Activated naive CD4-positive, alpha-beta T cell treated with anti-CD3 and anti-CD28 coated beads, Interleukin-2, amount 10 ng/mL, durations not matched to agents 7 days and 5 days (primary cell): ENCODE measurements at regions of chr3 and their contacts with region 1.

Region 1: GRCh38 chr3:184371570-184372018 is 6.4 kb downstream of the THPO start:
- DNase-seq: peak; percentile 75
- H3K4me3 Mint-ChIP-seq: no peak overlapping the region
- H3K27ac Mint-ChIP-seq: no peak overlapping the region
- H3K4me1 Mint-ChIP-seq: peaks cover 6% of the 10 kb centered on the region
- H3K27me3 Mint-ChIP-seq: peaks cover 33% of the 10 kb centered on the region

Region 2: DNA sequence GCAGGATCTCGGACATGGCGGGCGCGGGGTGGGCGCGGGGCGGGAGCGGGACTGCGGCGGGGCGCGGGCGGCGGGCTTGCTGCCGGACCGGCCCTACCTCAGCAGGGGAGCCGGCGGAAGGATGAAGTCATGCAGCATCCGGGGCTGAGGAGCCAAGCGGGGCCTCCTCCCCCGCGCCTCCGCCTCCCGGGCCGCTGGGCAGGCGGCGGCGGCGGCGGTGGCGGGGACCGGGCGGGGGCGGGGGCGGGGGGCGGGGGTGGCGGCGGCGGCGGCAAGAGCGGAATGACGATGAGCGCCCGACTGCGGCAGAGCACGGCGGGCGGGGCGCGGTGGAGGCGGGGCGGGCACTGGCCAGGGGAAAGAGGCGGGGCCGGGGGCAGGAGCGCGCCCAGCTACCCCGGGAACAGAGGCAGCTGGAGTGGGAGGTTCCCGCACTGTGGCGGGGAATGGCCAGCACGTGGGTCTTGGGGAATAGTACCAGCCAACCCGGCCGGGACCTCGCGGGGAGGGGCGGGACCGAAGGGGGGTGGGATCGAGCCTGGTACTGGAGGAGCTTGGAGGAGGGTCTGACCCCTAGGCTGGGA is 110.2 kb before region 1 on chr3 and contains the start of gene CAMK2N2:
- CTCF ChIA-PET with region 1: no interaction called
- DNase-seq: peak; percentile 67
- H3K4me3 Mint-ChIP-seq: peak within 1 kb of the TSS; percentile 69
- H3K27ac Mint-ChIP-seq: no peak within 1 kb of the TSS
- H3K4me1 Mint-ChIP-seq: peaks cover 22% of the 10 kb centered on the region
- H3K27me3 Mint-ChIP-seq: peaks cover 83% of the 10 kb centered on the region

Region 3: GRCh38 chr3:184354121-184354728 is 17.4 kb before region 1 on chr3:
- CTCF ChIA-PET with region 1: interaction called, 15 read pairs
- DNase-seq: peak; percentile 72
- H3K4me3 Mint-ChIP-seq: no peak overlapping the region
- H3K27ac Mint-ChIP-seq: no peak overlapping the region
- H3K4me1 Mint-ChIP-seq: no peaks in the 10 kb centered on the region
- H3K27me3 Mint-ChIP-seq: peaks cover 12% of the 10 kb centered on the region

Region 4: GRCh38 chr3:184417619-184418327 is 46.2 kb after region 1 on chr3:
- CTCF ChIA-PET with region 1: interaction called, 11 read pairs
- DNase-seq: peak; percentile 79
- H3K4me3 Mint-ChIP-seq: no peak overlapping the region
- H3K27ac Mint-ChIP-seq: no peak overlapping the region
- H3K4me1 Mint-ChIP-seq: no peaks in the 10 kb centered on the region
- H3K27me3 Mint-ChIP-seq: peaks cover 12% of the 10 kb centered on the region

Region 5: GRCh38 chr3:184469423-184469822 is 97.8 kb after region 1 on chr3:
- CTCF ChIA-PET with region 1: interaction called, 13 read pairs
- DNase-seq: peak; percentile 38
- H3K4me3 Mint-ChIP-seq: no peak overlapping the region
- H3K27ac Mint-ChIP-seq: no peak overlapping the region
- H3K4me1 Mint-ChIP-seq: peaks cover 10% of the 10 kb centered on the region
- H3K27me3 Mint-ChIP-seq: peaks cover 61% of the 10 kb centered on the region